ENCODE measurements at regions of chr6 and their contacts with region 1.

Region 1: GRCh38 chr6:63598049-63599036 is 26.1 kb downstream of the LOC128125822 start:
- DNase-seq: peak; percentile 63 to 73
- ATAC-seq: peak; percentile 92 to 97
- H3K4me3 ChIP-seq: peak overlapping the region; percentile 84
- H3K27ac ChIP-seq: peak overlapping the region; percentile 85 to 88
- H3K4me1 ChIP-seq: peaks cover 10% of the 10 kb centered on the region; the same call in 2 of the 3 replicates
- CTCF ChIP-seq: peak; percentile 61
- EP300 ChIP-seq: no peak
- POLR2A ChIP-seq: no peak
- RAD21 ChIP-seq: peak; percentile 62 to 66

Region 2: DNA sequence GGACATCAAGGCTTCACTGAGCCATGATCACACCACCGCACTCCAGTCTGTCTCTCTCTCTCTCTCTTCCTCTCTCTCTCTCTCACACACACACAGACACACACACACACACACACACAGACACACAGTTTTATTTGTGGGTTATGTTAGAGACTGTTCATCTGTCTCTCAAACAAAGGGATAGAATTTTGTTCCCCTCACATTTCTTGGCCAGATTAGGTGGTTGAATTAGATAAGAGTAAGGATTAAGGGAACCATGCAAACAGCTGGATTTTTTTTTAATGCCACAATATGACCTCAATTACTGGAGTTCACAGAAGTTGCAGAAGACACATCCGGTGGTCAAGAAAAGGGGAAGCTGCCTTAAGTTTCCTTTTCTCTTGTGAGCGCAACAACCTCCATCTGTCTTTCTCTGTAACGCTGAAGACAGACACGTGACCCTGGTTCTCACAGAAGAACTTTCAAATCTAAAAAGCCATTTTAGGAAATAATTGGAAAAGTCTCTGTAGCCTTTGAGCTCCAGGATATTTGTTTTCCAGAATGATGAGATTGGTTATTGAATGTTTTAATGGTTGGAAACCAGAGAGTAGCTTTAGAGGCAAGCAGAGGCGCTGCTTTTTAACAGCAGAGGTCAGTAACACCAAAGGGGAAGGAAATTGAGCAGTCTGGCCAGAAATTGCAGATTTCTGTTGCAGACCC is 245.6 kb before region 1 on chr6:
- CTCF ChIA-PET with region 1: interaction called, 16 read pairs
- POLR2A ChIA-PET with region 1: no interaction called
- DNase-seq: peak in 1 of 2 experiments; percentile 57
- ATAC-seq: peak; percentile 83 to 89
- H3K4me3 ChIP-seq: no peak overlapping the region
- H3K27ac ChIP-seq: peak overlapping the region; percentile 31 to 79; a peak in 4 of 6 replicates
- H3K4me1 ChIP-seq: peaks cover 60% of the 10 kb centered on the region
- CTCF ChIP-seq: peak; percentile 60
- EP300 ChIP-seq: no peak
- POLR2A ChIP-seq: no peak
- RAD21 ChIP-seq: peak; percentile 83 to 94

Region 3: GRCh38 chr6:63543982-63544381 is 54.4 kb before region 1 on chr6:
- CTCF ChIA-PET with region 1: no interaction called
- POLR2A ChIA-PET with region 1: no interaction called
- DNase-seq: no peak
- ATAC-seq: no peak
- H3K4me3 ChIP-seq: no peak overlapping the region
- H3K27ac ChIP-seq: peak overlapping the region in 1 of 2 experiments; percentile 61; a peak in 1 of 6 replicates
- H3K4me1 ChIP-seq: peaks cover 10% of the 10 kb centered on the region; the same call in 2 of the 3 replicates
- CTCF ChIP-seq: no peak
- EP300 ChIP-seq: no peak
- POLR2A ChIP-seq: no peak
- RAD21 ChIP-seq: no peak

Region 4: GRCh38 chr6:63635588-63636517 is 37.5 kb after region 1 on chr6 and contains the start of gene PHF3:
- CTCF ChIA-PET with region 1: interaction called, 14 read pairs
- POLR2A ChIA-PET with region 1: interaction called, 5 read pairs
- DNase-seq: peak; percentile 64 to 90
- ATAC-seq: peak; percentile 93
- H3K4me3 ChIP-seq: peak within 1 kb of the TSS; percentile 95
- H3K27ac ChIP-seq: peak within 1 kb of the TSS; percentile 96 to 98
- H3K4me1 ChIP-seq: peaks cover 34% of the 10 kb centered on the region
- CTCF ChIP-seq: no peak
- EP300 ChIP-seq: no peak
- POLR2A ChIP-seq: no peak; the same call in 1 of the 2 replicates
- RAD21 ChIP-seq: 0 out of 5 replicates have a peak, but pooled peaks of 1 of the 2 experiments have one; percentile 3
- polyA plus RNA-seq, gene PHF3: 19.5 and 28.4 TPM in 2 replicates

Measured in A549 (cell line).